A673 (cell line): ENCODE measurements at regions of chrX and their contacts with region 1.

Region 1: DNA sequence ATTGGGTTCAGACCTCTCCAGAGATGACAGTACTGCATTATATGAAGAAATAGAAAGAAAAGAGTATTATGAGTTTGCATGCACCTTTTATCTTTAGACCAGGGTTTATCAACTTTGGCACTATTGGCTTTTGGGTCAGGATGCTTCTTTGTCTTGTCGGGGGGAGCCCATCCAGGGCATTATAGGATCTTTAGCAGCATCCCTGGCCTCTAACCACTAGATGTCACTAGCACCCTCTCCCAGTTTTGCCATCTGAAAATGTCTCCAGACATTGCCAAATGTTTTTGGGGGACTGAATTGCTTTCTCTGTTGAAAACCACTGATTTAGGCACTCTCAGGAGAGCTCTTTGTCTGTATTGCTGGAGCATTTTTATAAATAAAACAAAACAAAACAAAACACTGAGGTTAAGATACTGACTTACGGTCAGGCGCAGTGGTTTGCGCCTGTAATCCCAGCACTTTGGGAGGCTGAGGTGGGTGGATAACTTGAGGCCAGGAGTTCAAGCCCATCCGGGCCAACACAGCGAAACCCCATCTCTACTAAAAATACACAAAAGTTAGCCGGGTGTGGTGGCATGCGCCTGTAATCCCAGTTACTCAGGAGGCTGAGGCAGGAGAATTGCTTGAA is 23.6 kb downstream of the CA5B start:
- DNase-seq: peak; percentile 69
- H3K4me3 ChIP-seq: no peak overlapping the region
- H3K27ac ChIP-seq: no peak overlapping the region
- H3K4me1 ChIP-seq: peaks cover 3% of the 10 kb centered on the region
- H3K27me3 ChIP-seq: no peaks in the 10 kb centered on the region
- CTCF ChIP-seq: peak; percentile 85

Region 2: GRCh38 chrX:15645258-15645657 is 116.4 kb before region 1 on chrX:
- CTCF ChIA-PET with region 1: no interaction called
- POLR2A ChIA-PET with region 1: no interaction called
- intact Hi-C with region 1: no loop called
- DNase-seq: no peak
- H3K4me3 ChIP-seq: no peak overlapping the region
- H3K27ac ChIP-seq: no peak overlapping the region
- H3K4me1 ChIP-seq: no peaks in the 10 kb centered on the region
- H3K27me3 ChIP-seq: peaks cover 19% of the 10 kb centered on the region
- CTCF ChIP-seq: no peak

Region 3: GRCh38 chrX:15815779-15816437 is 54.2 kb after region 1 on chrX:
- CTCF ChIA-PET with region 1: no interaction called
- POLR2A ChIA-PET with region 1: no interaction called
- intact Hi-C with region 1: loop called (anchors 2 kb)
- DNase-seq: peak; percentile 74
- H3K4me3 ChIP-seq: no peak overlapping the region
- H3K27ac ChIP-seq: no peak overlapping the region
- H3K4me1 ChIP-seq: peaks cover 7% of the 10 kb centered on the region
- H3K27me3 ChIP-seq: no peaks in the 10 kb centered on the region
- CTCF ChIP-seq: peak; percentile 64

Region 4: DNA sequence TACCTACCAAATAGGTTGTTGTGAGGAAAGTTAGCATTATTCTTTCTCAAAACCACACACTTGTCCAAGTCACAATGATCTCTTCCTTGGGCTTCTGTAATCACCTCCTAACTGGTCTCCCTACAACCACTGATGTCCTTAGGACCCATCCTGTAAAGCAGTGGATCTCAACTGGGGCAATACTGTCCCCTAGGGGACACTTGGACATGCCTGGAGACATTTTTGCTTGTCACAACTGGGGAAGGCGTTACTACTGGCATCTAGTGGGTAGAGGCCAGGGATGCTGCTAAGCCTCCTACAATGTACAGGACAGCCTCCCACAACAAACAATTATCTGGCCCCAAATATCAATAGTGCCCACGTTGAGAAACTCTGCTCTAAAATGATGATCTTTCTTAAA is 211.6 kb after region 1 on chrX:
- CTCF ChIA-PET with region 1: no interaction called
- POLR2A ChIA-PET with region 1: no interaction called
- intact Hi-C with region 1: loop called (anchors 10 kb)
- DNase-seq: peak; percentile 67
- H3K4me3 ChIP-seq: no peak overlapping the region
- H3K27ac ChIP-seq: no peak overlapping the region
- H3K4me1 ChIP-seq: no peaks in the 10 kb centered on the region
- H3K27me3 ChIP-seq: no peaks in the 10 kb centered on the region
- CTCF ChIP-seq: peak; percentile 56